CD4-positive, alpha-beta memory T cell (primary cell): ENCODE measurements at regions of chr10 and their contacts with region 1.

Region 1: GRCh38 chr10:98467506-98468346 is 21.0 kb upstream of the HPS1 start:
- DNase-seq: peak; percentile 67 to 72 (median 68)
- H3K4me3 ChIP-seq: peak overlapping the region; percentile 70 to 77
- H3K4me3 Mint-ChIP-seq: peak overlapping the region; percentile 97 to 99 (median 98)
- H3K27ac ChIP-seq: no peak overlapping the region
- H3K27ac Mint-ChIP-seq: peak overlapping the region; percentile 51 to 96 (median 94)
- H3K4me1 ChIP-seq: no peaks in the 10 kb centered on the region
- H3K4me1 Mint-ChIP-seq: peaks cover 2 to 15% (median 5%) of the 10 kb centered on the region in 4 donors
- H3K27me3 ChIP-seq: no peaks in the 10 kb centered on the region
- H3K27me3 Mint-ChIP-seq: peaks cover 4 to 5% of the 10 kb centered on the region in 2 donors

Region 2: GRCh38 chr10:98446661-98447221 is 21.0 kb before region 1 on chr10 and contains the start of gene HPS1:
- CTCF ChIA-PET with region 1: interaction called, 8 read pairs
- POLR2A ChIA-PET with region 1: interaction called, 10 read pairs
- intact Hi-C with region 1: loop called (anchors 1 kb)
- DNase-seq: peak; percentile 64 to 78 (median 78)
- H3K4me3 ChIP-seq: peak within 1 kb of the TSS; percentile 73 to 84
- H3K4me3 Mint-ChIP-seq: peak within 1 kb of the TSS; percentile 88 to 95 (median 94)
- H3K27ac ChIP-seq: peak within 1 kb of the TSS; percentile 76
- H3K27ac Mint-ChIP-seq: peak within 1 kb of the TSS; percentile 89 to 95 (median 93)
- H3K4me1 ChIP-seq: peaks cover 41% of the 10 kb centered on the region
- H3K4me1 Mint-ChIP-seq: peaks cover 29 to 58% (median 42%) of the 10 kb centered on the region in 4 donors
- H3K27me3 ChIP-seq: no peaks in the 10 kb centered on the region
- H3K27me3 Mint-ChIP-seq: no peaks in the 10 kb centered on the region
- total RNA-seq, gene HPS1: 106 to 115 TPM

Region 3: GRCh38 chr10:98478430-98479222 is 10.9 kb after region 1 on chr10:
- CTCF ChIA-PET with region 1: interaction called, 12 read pairs
- POLR2A ChIA-PET with region 1: interaction called, 3 read pairs
- intact Hi-C with region 1: no loop called
- DNase-seq: no peak
- H3K4me3 ChIP-seq: no peak overlapping the region
- H3K4me3 Mint-ChIP-seq: no peak overlapping the region
- H3K27ac ChIP-seq: no peak overlapping the region
- H3K27ac Mint-ChIP-seq: peak overlapping the region in 1 of 7 donors; percentile 50
- H3K4me1 ChIP-seq: peaks cover 5% of the 10 kb centered on the region
- H3K4me1 Mint-ChIP-seq: peaks cover 0 to 8% (median 5%) of the 10 kb centered on the region in 4 donors
- H3K27me3 ChIP-seq: no peaks in the 10 kb centered on the region
- H3K27me3 Mint-ChIP-seq: peaks cover 0 to 5% of the 10 kb centered on the region in 2 donors

Region 4: DNA sequence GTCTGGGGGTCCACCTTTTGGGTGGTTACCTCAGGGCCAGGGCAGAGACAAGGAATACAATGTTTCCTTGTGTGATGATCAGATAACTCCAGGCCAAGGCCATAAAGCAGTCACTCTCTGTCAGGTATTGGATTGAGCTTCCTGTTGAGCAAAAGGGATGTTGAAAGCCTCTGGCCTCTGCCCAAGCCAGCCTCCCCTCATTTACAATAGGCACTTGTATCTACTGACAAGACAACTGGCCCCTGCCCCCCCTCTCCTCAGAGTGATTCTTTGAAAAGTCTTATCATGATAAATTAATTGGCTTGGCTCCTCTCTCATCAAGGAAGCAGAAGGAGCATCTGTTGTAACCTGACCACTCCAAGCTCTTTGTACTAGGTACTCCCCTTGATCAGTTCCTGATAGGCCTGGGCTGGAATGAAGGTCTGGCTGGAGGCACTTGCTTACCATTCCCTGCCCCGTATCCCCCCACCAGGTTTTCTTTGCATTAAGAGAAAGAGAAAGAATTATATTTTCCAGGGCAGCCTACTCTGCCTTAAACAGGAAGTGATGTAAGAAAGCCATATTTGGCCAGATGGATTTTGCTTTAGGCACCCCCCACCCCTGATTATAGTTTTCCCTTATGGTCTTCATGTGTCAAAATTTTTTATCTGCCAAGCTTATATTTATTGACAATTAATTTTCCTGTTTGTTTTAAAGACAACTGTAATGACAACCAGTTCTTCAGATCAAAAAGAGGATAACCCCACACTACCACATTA is 21.1 kb after region 1 on chr10:
- CTCF ChIA-PET with region 1: no interaction called
- POLR2A ChIA-PET with region 1: no interaction called
- intact Hi-C with region 1: no loop called
- DNase-seq: peak in 1 of 5 donors; percentile 25
- H3K4me3 ChIP-seq: no peak overlapping the region
- H3K4me3 Mint-ChIP-seq: no peak overlapping the region
- H3K27ac ChIP-seq: no peak overlapping the region
- H3K27ac Mint-ChIP-seq: no peak overlapping the region
- H3K4me1 ChIP-seq: no peaks in the 10 kb centered on the region
- H3K4me1 Mint-ChIP-seq: no peaks in the 10 kb centered on the region
- H3K27me3 ChIP-seq: no peaks in the 10 kb centered on the region
- H3K27me3 Mint-ChIP-seq: peaks cover 6 to 7% of the 10 kb centered on the region in 2 donors

Region 5: GRCh38 chr10:99248824-99249223 is 781.1 kb after region 1 on chr10:
- CTCF ChIA-PET with region 1: interaction called, 45 read pairs
- POLR2A ChIA-PET with region 1: interaction called, 3 read pairs
- intact Hi-C with region 1: loop called (anchors 1 kb)
- DNase-seq: no peak
- H3K4me3 ChIP-seq: no peak overlapping the region
- H3K4me3 Mint-ChIP-seq: no peak overlapping the region
- H3K27ac ChIP-seq: no peak overlapping the region
- H3K27ac Mint-ChIP-seq: no peak overlapping the region
- H3K4me1 ChIP-seq: no peaks in the 10 kb centered on the region
- H3K4me1 Mint-ChIP-seq: no peaks in the 10 kb centered on the region
- H3K27me3 ChIP-seq: no peaks in the 10 kb centered on the region
- H3K27me3 Mint-ChIP-seq: peaks cover 15 to 22% of the 10 kb centered on the region in 2 donors

Region 6: DNA sequence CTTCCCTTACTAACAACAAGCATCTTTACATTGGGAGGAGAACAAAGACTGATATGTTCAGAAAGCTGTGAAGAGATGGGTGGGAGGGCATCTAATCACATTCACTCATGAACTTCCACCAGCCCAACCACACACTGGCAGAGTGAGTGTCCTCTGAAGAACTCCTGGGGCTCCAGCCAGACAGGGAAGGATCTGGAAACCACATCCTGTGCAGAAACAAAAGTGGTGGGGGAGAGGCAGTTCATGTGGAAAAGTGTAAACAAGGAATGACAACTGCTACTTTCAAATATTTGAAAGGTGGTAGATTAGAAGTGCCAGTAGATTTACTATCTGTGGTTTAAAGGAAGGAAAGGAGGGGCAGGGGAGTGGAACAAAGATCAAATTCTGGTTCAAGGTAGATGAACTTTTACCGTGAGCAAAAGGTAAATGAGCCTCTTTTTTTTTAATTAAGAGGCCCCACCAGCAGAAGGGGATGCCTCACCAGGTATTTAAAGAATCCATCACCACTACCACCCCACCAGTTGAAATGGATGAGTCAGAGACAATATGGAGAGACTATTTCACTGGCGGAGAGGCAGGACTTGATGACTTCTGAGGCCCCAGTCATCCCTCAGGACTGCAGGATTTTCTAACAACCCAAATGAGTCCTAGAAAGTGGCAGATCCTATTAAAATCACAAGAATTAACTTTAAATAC is 928.2 kb after region 1 on chr10:
- CTCF ChIA-PET with region 1: no interaction called
- POLR2A ChIA-PET with region 1: no interaction called
- intact Hi-C with region 1: loop called (anchors 1 kb)
- DNase-seq: no peak
- H3K4me3 ChIP-seq: no peak overlapping the region
- H3K4me3 Mint-ChIP-seq: no peak overlapping the region
- H3K27ac ChIP-seq: no peak overlapping the region
- H3K27ac Mint-ChIP-seq: peak overlapping the region in 5 of 7 donors; percentile 25 to 79 (median 66)
- H3K4me1 ChIP-seq: no peaks in the 10 kb centered on the region
- H3K4me1 Mint-ChIP-seq: peaks cover 0 to 8% (median 5%) of the 10 kb centered on the region in 4 donors
- H3K27me3 ChIP-seq: no peaks in the 10 kb centered on the region
- H3K27me3 Mint-ChIP-seq: no peaks in the 10 kb centered on the region

Region 7: GRCh38 chr10:99612167-99612831 is 1144.6 kb after region 1 on chr10:
- CTCF ChIA-PET with region 1: interaction called, 5 read pairs
- POLR2A ChIA-PET with region 1: no interaction called
- intact Hi-C with region 1: loop called (anchors 5 kb)
- DNase-seq: peak; percentile 46 to 61 (median 51)
- H3K4me3 ChIP-seq: no peak overlapping the region
- H3K4me3 Mint-ChIP-seq: peak overlapping the region in 1 of 8 donors; percentile 53
- H3K27ac ChIP-seq: no peak overlapping the region
- H3K27ac Mint-ChIP-seq: peak overlapping the region; percentile 24 to 85 (median 62)
- H3K4me1 ChIP-seq: peaks cover 18% of the 10 kb centered on the region
- H3K4me1 Mint-ChIP-seq: peaks cover 16 to 32% (median 26%) of the 10 kb centered on the region in 4 donors
- H3K27me3 ChIP-seq: no peaks in the 10 kb centered on the region
- H3K27me3 Mint-ChIP-seq: no peaks in the 10 kb centered on the region